ENCODE measurements at regions of chr10 and their contacts with region 1.

Region 1: DNA sequence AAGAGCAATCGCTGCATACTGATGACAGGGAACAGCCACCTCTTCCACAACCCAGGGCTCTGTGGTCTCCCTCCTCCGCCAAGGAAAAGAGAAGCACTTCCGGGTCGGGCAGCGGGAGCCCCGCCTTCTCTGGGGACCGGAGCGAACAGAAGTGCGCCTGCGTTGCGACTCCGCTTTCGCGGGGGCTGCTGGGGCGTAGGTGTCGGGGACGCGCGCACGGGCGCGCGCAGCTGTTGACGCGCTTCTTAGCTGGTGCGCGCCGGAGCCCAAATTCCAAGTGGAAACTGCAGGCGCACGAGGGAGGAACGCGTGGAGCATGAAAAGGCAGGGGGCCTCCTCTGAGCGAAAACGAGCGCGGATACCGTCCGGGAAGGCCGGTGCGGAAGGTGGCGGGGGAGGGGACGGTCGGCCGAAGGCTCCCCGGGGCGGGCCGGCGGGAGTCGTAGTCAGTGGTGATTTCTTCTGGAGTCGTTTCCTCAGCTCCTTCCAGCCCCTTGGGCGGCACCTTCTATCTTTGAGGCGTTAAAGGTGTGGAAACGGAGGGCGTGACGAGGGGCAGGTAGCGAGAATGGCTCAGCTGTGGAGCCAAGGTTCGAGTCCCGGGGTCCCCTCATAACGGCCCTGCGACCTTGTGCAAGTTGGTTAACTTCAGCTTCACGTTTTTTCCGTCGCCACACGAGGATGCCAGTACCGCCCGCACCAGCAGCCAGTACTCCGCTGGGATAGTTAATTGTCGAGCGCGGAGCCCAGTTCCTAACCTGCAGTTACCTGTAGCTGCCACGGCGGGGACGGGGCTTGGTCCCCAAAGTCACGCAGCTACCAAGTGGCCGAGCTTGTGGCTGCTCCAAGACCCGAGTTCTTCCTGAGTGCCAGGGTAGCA is at the starts of genes COX15 and CUTC:
- DNase-seq: peak; percentile 93 to 98
- ATAC-seq: peak; percentile 93 to 96 (median 94)
- H3K4me3 ChIP-seq: peak within 1 kb of the TSS; percentile 67
- H3K4me3 Mint-ChIP-seq: peak within 1 kb of the TSS; percentile 100
- H3K27ac ChIP-seq: peak within 1 kb of the TSS; percentile 70
- H3K27ac Mint-ChIP-seq: peak within 1 kb of the TSS; percentile 98 to 100
- H3K4me1 ChIP-seq: peaks cover 20% of the 10 kb centered on the region
- H3K4me1 Mint-ChIP-seq: peaks cover 27 to 43% of the 10 kb centered on the region in 2 donors
- H3K27me3 ChIP-seq: no peaks in the 10 kb centered on the region
- H3K27me3 Mint-ChIP-seq: no peaks in the 10 kb centered on the region
- CTCF ChIP-seq: peak; percentile 31
- total RNA-seq, gene COX15: 17.1 to 27.9 (median 20.3) TPM
- total RNA-seq, gene CUTC: 21.4 to 28.1 (median 23.5) TPM

Region 2: GRCh38 chr10:97960269-97961056 is 1771.8 kb before region 1 on chr10:
- intact Hi-C with region 1: no loop called
- DNase-seq: no peak
- ATAC-seq: no peak
- H3K4me3 ChIP-seq: no peak overlapping the region
- H3K4me3 Mint-ChIP-seq: no peak overlapping the region
- H3K27ac ChIP-seq: no peak overlapping the region
- H3K27ac Mint-ChIP-seq: no peak overlapping the region
- H3K4me1 ChIP-seq: no peaks in the 10 kb centered on the region
- H3K4me1 Mint-ChIP-seq: no peaks in the 10 kb centered on the region
- H3K27me3 ChIP-seq: peaks cover 3% of the 10 kb centered on the region
- H3K27me3 Mint-ChIP-seq: peaks cover 17 to 65% of the 10 kb centered on the region in 2 donors
- CTCF ChIP-seq: no peak

Region 3: DNA sequence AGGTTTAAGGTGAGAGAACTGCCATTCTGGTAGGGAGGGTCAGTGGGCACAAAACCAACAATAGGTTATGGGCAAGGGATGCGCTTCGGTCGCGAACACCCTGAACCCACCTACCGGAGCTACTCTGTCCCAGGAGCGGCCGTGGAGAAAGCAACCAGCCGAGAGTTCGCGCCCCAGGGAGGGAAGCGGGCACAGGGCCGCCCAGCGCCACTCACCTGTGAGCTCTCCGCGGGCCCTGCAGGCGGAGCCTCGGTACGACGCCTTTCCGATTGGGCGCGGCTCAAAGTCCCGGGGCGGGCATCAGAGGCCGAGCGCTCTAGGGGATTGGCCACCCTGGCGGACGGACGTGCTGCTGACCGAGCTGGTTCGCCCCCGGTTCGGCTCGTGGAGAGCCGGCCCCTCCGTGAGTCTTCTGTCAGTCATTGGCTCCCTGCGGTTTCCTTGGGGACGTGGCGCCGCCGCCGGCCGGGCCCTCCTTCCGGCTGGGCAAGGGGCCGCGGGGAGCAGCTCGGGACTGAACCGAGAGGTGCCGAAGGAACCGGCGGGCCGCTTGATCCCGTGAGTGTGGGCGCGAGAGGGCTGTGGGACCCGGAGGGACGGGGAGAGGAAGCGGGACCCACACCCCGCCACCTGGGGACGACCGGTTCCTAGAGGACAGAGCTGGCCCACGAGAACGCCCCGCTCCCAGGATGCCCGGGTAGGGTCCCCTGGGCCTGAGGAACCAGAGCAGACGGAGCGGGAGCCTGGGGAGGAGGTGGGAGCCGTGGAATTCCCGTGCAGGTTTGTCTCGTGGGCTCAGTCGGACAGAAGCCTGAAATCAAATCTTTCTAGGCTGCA is 73.0 kb before region 1 on chr10 and contains the start of gene ENTPD7:
- intact Hi-C with region 1: loop called (anchors 2 kb)
- DNase-seq: peak; percentile 83 to 91
- ATAC-seq: peak; percentile 97 to 99 (median 98)
- H3K4me3 ChIP-seq: peak within 1 kb of the TSS; percentile 68
- H3K4me3 Mint-ChIP-seq: peak within 1 kb of the TSS; percentile 96
- H3K27ac ChIP-seq: peak within 1 kb of the TSS; percentile 27
- H3K27ac Mint-ChIP-seq: peak within 1 kb of the TSS; percentile 79 to 85
- H3K4me1 ChIP-seq: peaks cover 14% of the 10 kb centered on the region
- H3K4me1 Mint-ChIP-seq: peaks cover 22 to 24% of the 10 kb centered on the region in 2 donors
- H3K27me3 ChIP-seq: no peaks in the 10 kb centered on the region
- H3K27me3 Mint-ChIP-seq: peaks cover 11 to 12% of the 10 kb centered on the region in 2 donors
- CTCF ChIP-seq: no peak
- total RNA-seq, gene ENTPD7: 3.7 to 6.3 (median 5.6) TPM

Region 4: GRCh38 chr10:100020142-100020885 is 288.0 kb after region 1 on chr10:
- intact Hi-C with region 1: no loop called
- DNase-seq: peak in 1 of 2 donors; percentile 17
- ATAC-seq: peak; percentile 34 to 83 (median 39)
- H3K4me3 ChIP-seq: no peak overlapping the region
- H3K4me3 Mint-ChIP-seq: no peak overlapping the region
- H3K27ac ChIP-seq: no peak overlapping the region
- H3K27ac Mint-ChIP-seq: peak overlapping the region in 1 of 2 donors; percentile 3
- H3K4me1 ChIP-seq: peaks cover 3% of the 10 kb centered on the region
- H3K4me1 Mint-ChIP-seq: peaks cover 6 to 9% of the 10 kb centered on the region in 2 donors
- H3K27me3 ChIP-seq: no peaks in the 10 kb centered on the region
- H3K27me3 Mint-ChIP-seq: peaks cover 2 to 11% of the 10 kb centered on the region in 2 donors
- CTCF ChIP-seq: no peak

Region 5: DNA sequence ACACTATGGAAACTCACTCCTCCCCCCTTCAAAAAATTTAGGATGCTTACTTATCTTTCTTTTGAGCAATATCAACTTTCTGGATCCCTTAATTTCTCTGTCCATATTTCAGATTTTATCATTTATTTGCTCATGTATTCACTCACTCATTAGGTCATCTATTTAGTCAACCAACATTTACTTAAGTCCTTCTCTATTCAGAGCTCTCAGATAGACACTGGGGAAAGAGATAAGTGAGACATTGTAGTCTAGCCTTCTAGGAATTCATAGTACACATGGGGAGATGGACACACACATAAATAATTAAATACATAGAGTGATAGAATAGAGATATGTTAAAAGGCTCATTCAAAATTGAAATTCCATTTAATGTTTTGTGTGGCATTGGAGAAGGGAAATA is 340.2 kb after region 1 on chr10:
- intact Hi-C with region 1: no loop called
- DNase-seq: no peak
- ATAC-seq: no peak
- H3K4me3 ChIP-seq: no peak overlapping the region
- H3K4me3 Mint-ChIP-seq: no peak overlapping the region
- H3K27ac ChIP-seq: no peak overlapping the region
- H3K27ac Mint-ChIP-seq: no peak overlapping the region
- H3K4me1 ChIP-seq: no peaks in the 10 kb centered on the region
- H3K4me1 Mint-ChIP-seq: no peaks in the 10 kb centered on the region
- H3K27me3 ChIP-seq: no peaks in the 10 kb centered on the region
- H3K27me3 Mint-ChIP-seq: peaks cover 0 to 9% of the 10 kb centered on the region in 2 donors
- CTCF ChIP-seq: no peak

Measured in natural killer cell (primary cell).